ENCODE measurements at regions of chr14 and their contacts with region 1.

Region 1: DNA sequence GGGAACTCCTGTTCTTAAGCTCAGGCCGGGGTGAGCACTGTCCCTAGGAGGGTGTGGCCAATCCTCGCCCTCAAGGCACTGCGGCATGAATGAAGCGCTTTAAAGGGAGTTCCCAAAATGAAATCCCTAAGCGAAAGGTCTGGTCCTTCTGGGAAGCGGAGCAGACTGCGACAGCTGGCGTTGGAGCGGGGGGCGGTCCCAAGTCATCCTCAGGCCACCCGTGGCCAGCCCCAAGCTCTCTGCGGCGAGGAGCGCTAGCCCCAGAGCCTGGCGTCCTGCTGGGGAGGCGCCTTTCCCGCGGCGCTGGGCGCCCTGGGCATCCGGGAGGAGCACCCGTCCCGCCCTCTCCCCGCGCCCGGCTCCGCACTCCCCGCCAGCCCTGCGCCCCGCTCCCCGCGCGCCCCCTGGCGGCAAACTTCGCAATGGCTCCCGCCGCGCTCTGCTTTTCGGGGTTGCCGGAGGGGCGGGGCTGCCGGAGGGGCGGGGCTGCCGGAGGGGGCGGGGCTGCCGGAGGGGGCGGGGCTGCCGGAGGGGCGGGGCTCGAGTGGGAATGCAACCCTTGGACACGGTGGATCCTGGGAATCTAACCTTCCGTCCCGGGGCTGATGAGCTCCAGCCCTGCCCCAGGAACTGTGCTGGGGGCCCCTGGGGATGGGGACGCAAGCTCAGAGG is 25.4 kb downstream of the ZBTB42 start:
- DNase-seq: peak; percentile 95
- ATAC-seq: peak; percentile 92

Region 2: GRCh38 chr14:104650057-104650981 is 176.0 kb before region 1 on chr14:
- intact Hi-C with region 1: no loop called
- DNase-seq: peak; percentile 76
- ATAC-seq: peak; percentile 81

Region 3: GRCh38 chr14:104768437-104769323 is 57.6 kb before region 1 on chr14:
- intact Hi-C with region 1: loop called (anchors 1 kb)
- DNase-seq: peak; percentile 95
- ATAC-seq: peak; percentile 91

Measured in Right ventricle myocardium inferior (tissue), 1 donor.